ENCODE measurements at regions of chr13 and their contacts with region 1.

Region 1: GRCh38 chr13:33817901-33818706 is at the start of gene RFC3:
- ATAC-seq: peak; percentile 96 to 99 (median 98)
- H3K4me3 ChIP-seq: peak within 1 kb of the TSS; percentile 61 to 92 (median 84)
- H3K27ac ChIP-seq: peak within 1 kb of the TSS; percentile 70 to 84
- H3K4me1 ChIP-seq: no peaks in the 10 kb centered on the region
- total RNA-seq, gene RFC3: 5.3 to 48.1 (median 9.7) TPM

Region 2: GRCh38 chr13:34070006-34070405 is 251.9 kb after region 1 on chr13:
- in situ Hi-C with region 1: loop called in 1 of 9 experiments (anchors 25 kb)
- ATAC-seq: peak in 5 of 8 experiments; percentile 30 to 87 (median 44)
- H3K4me3 ChIP-seq: no peak overlapping the region
- H3K27ac ChIP-seq: no peak overlapping the region
- H3K4me1 ChIP-seq: no peaks in the 10 kb centered on the region